ENCODE measurements at regions of chr6 and their contacts with region 1.

Region 1: DNA sequence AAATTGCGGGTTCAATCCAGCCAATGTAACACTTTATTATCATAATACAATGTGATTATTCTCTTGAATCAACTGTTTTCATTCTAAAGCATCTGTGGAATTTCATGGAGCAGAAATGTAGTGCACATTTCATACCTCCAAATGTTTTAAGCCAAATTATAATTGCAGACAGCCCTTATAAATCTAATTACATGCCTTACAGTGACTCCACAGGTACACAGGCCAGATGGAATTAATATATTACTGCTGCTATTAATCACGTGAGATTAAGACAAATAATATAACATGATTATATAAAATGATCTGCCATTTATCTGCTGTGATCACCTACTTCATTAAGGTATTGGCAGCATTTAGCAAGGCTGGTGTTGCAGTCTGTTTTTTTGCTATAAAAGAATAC is 9.7 kb upstream of the ECI2 start:
- DNase-seq: no peak

Region 2: DNA sequence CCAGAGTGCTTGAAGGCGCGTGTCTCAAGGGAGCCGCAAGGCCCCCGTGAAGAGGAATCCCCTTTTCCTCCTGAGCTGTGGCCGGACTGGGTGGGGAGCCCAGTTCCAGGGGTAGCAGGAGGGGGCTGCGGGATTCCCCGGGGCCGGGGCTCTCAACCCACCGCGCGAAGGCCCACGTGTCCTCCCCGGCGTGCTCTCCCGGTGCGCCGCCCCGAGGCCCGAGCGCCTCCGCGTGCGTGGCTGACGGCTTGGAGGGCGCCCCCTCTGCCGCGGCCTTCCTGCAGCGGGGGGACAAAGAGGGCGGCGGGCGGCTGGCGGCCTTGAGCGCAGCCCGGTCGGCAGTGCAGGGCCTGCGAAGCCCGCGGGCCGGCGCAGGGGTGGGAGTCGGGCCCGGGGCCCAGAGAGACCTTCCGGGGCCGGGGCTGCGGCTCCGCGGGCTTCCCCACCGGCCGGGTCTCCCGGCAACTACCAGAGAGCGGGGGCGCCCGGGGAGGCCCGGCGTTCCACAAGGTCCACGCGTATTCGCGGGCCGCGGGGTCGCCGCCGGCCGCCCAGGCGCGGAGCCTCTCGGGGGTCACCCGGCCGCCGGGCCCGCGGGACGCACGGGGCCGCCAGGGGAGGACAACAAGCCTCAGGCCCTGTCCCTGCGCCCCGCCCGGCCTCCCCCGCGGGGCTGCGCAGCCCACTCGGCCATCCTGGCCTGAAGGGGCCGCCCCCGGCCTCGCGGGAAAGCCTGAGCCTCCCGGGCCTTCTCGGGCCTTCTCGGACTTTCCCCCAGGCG is 66.2 kb before region 1 on chr6 and contains the start of gene FAM217A:
- intact Hi-C with region 1: loop called in 1 of 2 experiments (anchors 10 kb)
- DNase-seq: no peak
- total RNA-seq, gene FAM217A: not detected